ENCODE measurements at regions of chr11 and their contacts with region 1.

Region 1: GRCh38 chr11:128857341-128857740 is 9.8 kb downstream of the KCNJ1 start:
- H3K4me3 ChIP-seq: no peak overlapping the region
- H3K27ac ChIP-seq: no peak overlapping the region
- H3K4me1 ChIP-seq: no peaks in the 10 kb centered on the region
- CTCF ChIP-seq: no peak

Region 2: DNA sequence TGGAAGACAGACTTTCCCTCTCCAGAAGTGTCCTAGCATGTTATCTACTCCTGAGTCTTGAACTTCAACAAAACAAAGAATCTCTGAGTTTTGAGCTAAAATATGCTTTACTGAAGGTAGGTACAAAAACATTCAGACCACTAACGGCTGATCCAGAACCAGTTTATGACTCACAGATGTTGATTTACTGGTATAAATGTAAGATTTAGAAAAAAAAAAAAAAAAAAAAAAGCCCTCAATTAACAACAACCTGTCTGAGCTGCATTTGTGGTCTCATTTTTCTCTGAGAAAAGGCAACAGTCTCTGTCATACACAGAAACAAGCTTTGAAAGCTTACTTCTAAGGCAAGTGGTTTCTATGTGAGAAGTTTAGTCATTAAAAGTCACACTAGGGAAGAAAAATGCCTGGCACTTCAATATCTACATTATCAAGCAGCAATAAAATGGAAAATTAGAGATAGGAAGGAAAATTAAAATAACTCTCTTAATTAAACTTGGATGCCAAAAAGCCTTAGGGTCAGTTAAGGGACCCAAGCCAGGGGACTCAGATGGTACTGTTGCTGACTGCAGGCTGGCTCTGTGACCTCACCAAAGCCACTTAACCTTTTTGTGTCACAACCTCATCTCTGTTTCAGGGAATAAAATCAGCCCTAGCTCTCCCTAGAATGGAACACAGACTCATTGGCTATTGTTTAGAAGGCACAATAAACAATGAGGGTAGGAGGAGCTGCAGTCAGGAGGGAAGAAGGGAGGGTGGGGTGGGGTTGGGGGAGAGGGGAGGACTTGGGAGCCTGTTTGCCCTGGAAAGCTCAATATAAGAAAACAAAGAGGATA is 331.7 kb before region 1 on chr11:
- CTCF ChIA-PET with region 1: no interaction called
- POLR2A ChIA-PET with region 1: interaction called, 10 read pairs
- H3K4me3 ChIP-seq: no peak overlapping the region
- H3K27ac ChIP-seq: no peak overlapping the region
- H3K4me1 ChIP-seq: peaks cover 12% of the 10 kb centered on the region
- CTCF ChIP-seq: no peak

Measured in HEK293 (cell line).